ENCODE measurements at regions of chr1 and their contacts with region 1.

Region 1: GRCh38 chr1:151165738-151166505 is at the starts of genes LYSMD1 and SCNM1:
- DNase-seq: peak; percentile 98
- ATAC-seq: peak; percentile 97
- H3K4me3 Mint-ChIP-seq: peak within 1 kb of the TSS; percentile 91
- H3K27ac Mint-ChIP-seq: peak within 1 kb of the TSS; percentile 94
- H3K4me1 Mint-ChIP-seq: peaks cover 46% of the 10 kb centered on the region
- H3K27me3 Mint-ChIP-seq: no peaks in the 10 kb centered on the region
- CTCF ChIP-seq: no peak
- total RNA-seq, gene LYSMD1: 4.5 TPM
- total RNA-seq, gene SCNM1: 57.0 to 59.6 TPM

Region 2: GRCh38 chr1:150974580-150975478 is 191.1 kb before region 1 on chr1 and contains the start of gene CERS2:
- CTCF ChIA-PET with region 1: no interaction called
- POLR2A ChIA-PET with region 1: no interaction called
- intact Hi-C with region 1: no loop called
- DNase-seq: peak; percentile 72
- ATAC-seq: peak; percentile 44
- H3K4me3 Mint-ChIP-seq: peak within 1 kb of the TSS; percentile 91
- H3K27ac Mint-ChIP-seq: peak within 1 kb of the TSS; percentile 90
- H3K4me1 Mint-ChIP-seq: peaks cover 66% of the 10 kb centered on the region
- H3K27me3 Mint-ChIP-seq: no peaks in the 10 kb centered on the region
- CTCF ChIP-seq: no peak
- total RNA-seq, gene CERS2: 129 to 132 TPM

Region 3: GRCh38 chr1:151189638-151190445 is 23.9 kb after region 1 on chr1 and contains the start of gene VPS72:
- CTCF ChIA-PET with region 1: interaction called, 5 read pairs
- POLR2A ChIA-PET with region 1: interaction called, 25 read pairs
- intact Hi-C with region 1: no loop called
- DNase-seq: peak; percentile 93
- ATAC-seq: peak; percentile 94
- H3K4me3 Mint-ChIP-seq: peak within 1 kb of the TSS; percentile 94
- H3K27ac Mint-ChIP-seq: peak within 1 kb of the TSS; percentile 96
- H3K4me1 Mint-ChIP-seq: peaks cover 20% of the 10 kb centered on the region
- H3K27me3 Mint-ChIP-seq: no peaks in the 10 kb centered on the region
- CTCF ChIP-seq: no peak
- total RNA-seq, gene VPS72: 47.4 to 61.0 TPM